Prostate gland (tissue), 2 donors: ENCODE measurements at regions of chr7 and their contacts with region 1.

Region 1: GRCh38 chr7:102125127-102125561 is 161.5 kb upstream of the SH2B2 start:
- DNase-seq: no peak
- H3K4me3 ChIP-seq: no peak overlapping the region
- H3K27ac ChIP-seq: no peak overlapping the region
- H3K4me1 ChIP-seq: no peaks in the 10 kb centered on the region
- H3K27me3 ChIP-seq: no peaks in the 10 kb centered on the region
- CTCF ChIP-seq: no peak
- POLR2A ChIP-seq: no peak

Region 2: DNA sequence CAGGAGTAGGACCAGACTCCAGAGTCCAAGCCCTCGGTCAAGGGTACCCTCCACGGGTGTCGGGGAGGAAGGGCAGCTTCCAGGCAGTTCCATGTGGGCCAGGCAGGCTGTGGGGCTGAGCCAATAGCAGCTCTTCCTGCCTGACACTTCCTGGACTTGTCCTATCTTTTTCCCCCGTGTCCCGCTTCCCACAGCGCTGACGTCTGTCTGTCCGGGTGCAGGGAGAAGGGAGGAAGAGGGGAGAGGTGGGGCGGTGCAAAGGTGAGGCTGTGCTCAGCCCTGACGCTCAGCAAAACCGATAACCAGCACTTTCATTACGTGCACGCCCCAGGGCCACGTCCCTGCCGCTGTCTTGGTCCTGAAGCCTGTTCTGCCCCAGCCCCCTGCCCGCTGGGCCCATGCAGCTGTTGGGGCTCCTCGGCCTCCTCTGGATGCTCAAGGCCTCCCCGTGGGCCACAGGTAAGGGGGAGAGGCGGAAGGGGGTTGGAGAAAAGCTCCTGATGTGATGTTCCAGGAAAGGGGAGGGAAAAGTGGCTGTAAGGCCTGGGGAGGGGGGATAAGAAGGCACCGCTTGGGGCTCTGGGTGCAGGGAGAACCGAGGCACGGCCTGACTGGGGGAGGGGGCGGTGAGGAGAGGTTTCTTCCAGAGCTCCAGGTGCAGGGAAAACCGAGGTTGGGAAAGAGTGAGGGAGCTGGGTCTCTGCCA is 1175.8 kb before region 1 on chr7 and contains the start of gene MUC3A:
- intact Hi-C with region 1: no loop called
- DNase-seq: no peak
- H3K4me3 ChIP-seq: no peak within 1 kb of the TSS
- H3K27ac ChIP-seq: no peak within 1 kb of the TSS
- H3K4me1 ChIP-seq: no peaks in the 10 kb centered on the region
- H3K27me3 ChIP-seq: peaks cover 9% of the 10 kb centered on the region
- CTCF ChIP-seq: no peak
- POLR2A ChIP-seq: no peak
- total RNA-seq, gene MUC3A: 28.8 to 46.0 TPM

Region 3: GRCh38 chr7:101815835-101816493 is 309.2 kb before region 1 on chr7:
- intact Hi-C with region 1: loop called (anchors 5 kb)
- DNase-seq: peak; percentile 57
- H3K4me3 ChIP-seq: peak overlapping the region; percentile 63 to 68
- H3K27ac ChIP-seq: peak overlapping the region; percentile 79 to 83
- H3K4me1 ChIP-seq: no peaks in the 10 kb centered on the region
- H3K27me3 ChIP-seq: no peaks in the 10 kb centered on the region
- CTCF ChIP-seq: peak in 1 of 4 experiments; percentile 32
- POLR2A ChIP-seq: no peak

Region 4: DNA sequence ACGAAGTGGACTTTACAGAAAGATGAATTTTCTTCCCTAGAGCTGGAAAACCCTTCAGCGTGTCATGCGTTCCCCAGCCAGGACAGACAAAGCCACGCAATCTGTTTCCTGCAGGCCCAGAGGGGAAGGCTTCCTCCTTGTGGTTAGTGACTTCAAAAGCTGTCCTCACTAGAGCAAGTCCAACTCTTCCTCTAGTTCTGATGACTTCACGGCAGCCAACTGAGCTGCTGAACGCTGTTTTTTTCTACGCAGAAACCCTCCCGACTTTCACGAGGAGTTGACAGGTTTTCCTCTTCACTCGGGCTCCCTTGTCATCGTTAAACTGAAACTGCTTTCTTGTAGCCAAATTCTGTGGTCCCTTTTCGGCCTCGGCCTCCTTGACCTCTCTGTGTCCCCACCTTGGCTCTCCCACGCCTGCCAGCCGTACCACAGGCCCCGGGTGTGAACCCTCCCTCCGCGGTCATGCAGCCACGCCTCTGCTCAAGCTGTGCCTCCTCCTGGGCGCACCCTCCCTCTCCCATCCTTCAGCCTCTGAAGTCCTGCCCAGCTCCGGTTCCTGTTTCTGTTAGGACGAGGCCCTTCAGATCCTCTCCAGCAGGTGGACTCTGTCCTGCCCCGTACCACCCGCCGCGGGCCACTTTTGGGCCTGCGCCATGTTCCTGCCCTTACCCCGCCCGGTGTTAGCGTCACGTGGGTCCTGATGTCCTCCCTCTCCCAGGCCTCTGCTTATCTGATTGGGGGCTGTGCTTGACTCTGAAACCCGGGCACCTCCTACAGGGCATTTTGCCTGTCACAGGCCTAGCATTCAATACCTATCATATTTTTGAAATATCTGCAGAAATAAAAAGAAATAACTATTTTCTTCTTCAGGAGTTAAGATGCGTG is 268.4 kb before region 1 on chr7:
- intact Hi-C with region 1: loop called (anchors 10 kb)
- DNase-seq: peak; percentile 91
- H3K4me3 ChIP-seq: peak overlapping the region; percentile 6 to 17
- H3K27ac ChIP-seq: peak overlapping the region; percentile 84 to 90
- H3K4me1 ChIP-seq: peaks cover 10% of the 10 kb centered on the region
- H3K27me3 ChIP-seq: no peaks in the 10 kb centered on the region
- CTCF ChIP-seq: peak in 3 of 4 experiments; percentile 49 to 85 (median 81)
- POLR2A ChIP-seq: no peak

Region 5: DNA sequence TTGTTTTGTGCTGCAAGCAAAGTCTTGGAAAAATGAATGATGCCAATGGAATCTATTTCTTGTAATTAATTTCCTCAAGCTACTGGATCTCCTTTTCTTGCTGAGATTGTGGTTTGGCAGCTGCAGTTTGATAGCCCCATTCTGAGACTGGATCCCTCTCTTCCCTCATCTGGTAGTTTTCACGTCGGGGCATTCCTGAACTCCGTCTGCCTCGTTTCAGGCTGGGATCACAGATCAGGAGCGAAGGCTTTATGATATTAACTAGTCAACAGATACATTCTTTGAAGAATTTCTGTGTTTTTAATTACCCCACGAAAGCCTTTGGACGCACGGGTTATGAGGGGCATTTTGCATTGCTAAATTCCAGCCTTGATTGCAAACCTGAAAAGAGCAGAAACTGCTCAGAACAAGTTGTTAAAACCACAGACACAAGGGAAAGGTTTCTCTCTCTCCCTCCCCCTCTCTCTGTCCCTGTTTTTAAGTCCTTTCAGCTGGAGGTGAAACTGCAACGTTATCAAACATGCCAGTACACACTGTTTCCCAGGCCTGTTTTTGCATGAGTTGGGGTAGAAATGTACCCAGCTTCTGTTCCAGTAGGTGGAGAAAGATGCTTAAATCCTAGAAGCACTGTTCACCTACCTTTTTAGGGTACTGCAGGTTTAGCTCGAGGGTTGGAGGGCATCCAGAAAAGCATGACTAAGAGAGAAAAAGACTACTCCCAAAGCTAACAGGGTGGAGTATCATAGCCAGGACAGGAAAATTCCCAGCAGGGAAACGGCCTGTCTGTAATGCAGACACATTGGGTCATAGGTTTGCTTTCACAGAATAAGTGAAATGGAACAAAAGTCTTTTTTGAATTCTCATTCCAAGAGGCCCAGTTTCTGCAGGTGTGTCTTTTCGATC is 183.4 kb before region 1 on chr7:
- intact Hi-C with region 1: loop called (anchors 10 kb)
- DNase-seq: peak; percentile 85
- H3K4me3 ChIP-seq: no peak overlapping the region
- H3K27ac ChIP-seq: peak overlapping the region; percentile 75 to 84
- H3K4me1 ChIP-seq: peaks cover 17% of the 10 kb centered on the region
- H3K27me3 ChIP-seq: no peaks in the 10 kb centered on the region
- CTCF ChIP-seq: no peak
- POLR2A ChIP-seq: no peak